ENCODE measurements at regions of chr2 and their contacts with region 1.

Region 1: GRCh38 chr2:95402370-95403203 is at the start of gene FAHD2A:
- DNase-seq: peak; percentile 95 to 97
- H3K4me3 ChIP-seq: peak within 1 kb of the TSS; percentile 89
- H3K4me3 Mint-ChIP-seq: peak within 1 kb of the TSS; percentile 99
- H3K27ac Mint-ChIP-seq: peak within 1 kb of the TSS; percentile 98
- H3K4me1 ChIP-seq: peaks cover 7% of the 10 kb centered on the region; the same call in 1 of the 2 replicates
- H3K4me1 Mint-ChIP-seq: peaks cover 7% of the 10 kb centered on the region
- H3K27me3 ChIP-seq: no peaks in the 10 kb centered on the region
- H3K27me3 Mint-ChIP-seq: no peaks in the 10 kb centered on the region
- CTCF ChIP-seq: no peak
- total RNA-seq, gene FAHD2A: 23.8 and 26.8 TPM in 2 replicates

Region 2: DNA sequence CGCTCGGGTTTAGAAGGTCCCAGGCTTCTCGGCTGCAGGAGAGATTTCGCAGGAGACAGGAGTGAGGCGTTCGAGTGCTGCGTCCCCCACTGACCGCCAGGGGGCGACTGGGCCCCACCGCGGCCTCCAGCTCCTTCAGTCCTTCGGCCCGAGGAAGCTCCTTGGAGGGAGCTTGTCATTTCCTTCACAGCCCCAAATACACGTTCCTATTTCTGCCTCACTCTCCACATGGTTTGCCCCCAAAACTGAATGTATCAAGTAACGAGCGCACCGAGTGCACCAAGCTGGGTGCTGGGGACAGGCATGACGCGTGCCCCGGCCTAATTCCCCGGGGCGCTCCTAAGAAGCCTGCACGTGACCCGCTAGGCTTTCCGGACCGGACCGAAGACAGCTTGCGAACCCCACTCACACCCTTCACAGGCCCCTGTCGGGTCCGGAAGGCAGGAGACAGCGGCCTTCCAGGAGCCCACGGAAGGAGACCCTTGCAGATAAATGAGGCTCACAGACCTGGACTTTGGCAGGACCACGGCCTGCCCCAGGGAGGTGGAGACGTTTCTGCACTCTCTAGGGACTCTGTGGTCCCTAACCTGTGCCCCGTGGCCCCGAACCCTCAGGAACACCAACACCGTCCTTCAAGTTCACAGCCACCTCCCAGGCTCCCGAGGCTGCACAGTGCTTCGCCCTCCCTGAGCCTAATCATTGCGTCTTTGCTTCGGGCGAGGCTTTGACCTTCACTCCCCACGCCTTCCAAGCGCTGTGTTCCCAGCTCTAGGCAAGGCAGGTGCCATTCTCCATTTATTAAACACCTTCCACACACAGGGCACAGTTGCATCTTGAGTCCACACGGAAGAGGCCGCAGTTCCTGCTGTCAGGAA is 13.1 kb before region 1 on chr2:
- CTCF ChIA-PET with region 1: interaction called, 11 read pairs
- POLR2A ChIA-PET with region 1: no interaction called
- intact Hi-C with region 1: no loop called
- DNase-seq: peak in 1 of 2 experiments; percentile 60
- H3K4me3 ChIP-seq: no peak overlapping the region
- H3K4me3 Mint-ChIP-seq: no peak overlapping the region
- H3K27ac Mint-ChIP-seq: no peak overlapping the region
- H3K4me1 ChIP-seq: peaks cover 14% of the 10 kb centered on the region
- H3K4me1 Mint-ChIP-seq: no peaks in the 10 kb centered on the region
- H3K27me3 ChIP-seq: no peaks in the 10 kb centered on the region
- H3K27me3 Mint-ChIP-seq: no peaks in the 10 kb centered on the region
- CTCF ChIP-seq: peak; percentile 47 to 76